ENCODE measurements at regions of chr9 and their contacts with region 1.

Region 1: GRCh38 chr9:22244141-22245011 is 202.2 kb upstream of the DMRTA1 start:
- DNase-seq: peak; percentile 78
- H3K4me3 ChIP-seq: no peak overlapping the region
- H3K27ac ChIP-seq: peak overlapping the region; percentile 44
- H3K27me3 ChIP-seq: no peaks in the 10 kb centered on the region
- CTCF ChIP-seq: peak; percentile 75

Region 2: DNA sequence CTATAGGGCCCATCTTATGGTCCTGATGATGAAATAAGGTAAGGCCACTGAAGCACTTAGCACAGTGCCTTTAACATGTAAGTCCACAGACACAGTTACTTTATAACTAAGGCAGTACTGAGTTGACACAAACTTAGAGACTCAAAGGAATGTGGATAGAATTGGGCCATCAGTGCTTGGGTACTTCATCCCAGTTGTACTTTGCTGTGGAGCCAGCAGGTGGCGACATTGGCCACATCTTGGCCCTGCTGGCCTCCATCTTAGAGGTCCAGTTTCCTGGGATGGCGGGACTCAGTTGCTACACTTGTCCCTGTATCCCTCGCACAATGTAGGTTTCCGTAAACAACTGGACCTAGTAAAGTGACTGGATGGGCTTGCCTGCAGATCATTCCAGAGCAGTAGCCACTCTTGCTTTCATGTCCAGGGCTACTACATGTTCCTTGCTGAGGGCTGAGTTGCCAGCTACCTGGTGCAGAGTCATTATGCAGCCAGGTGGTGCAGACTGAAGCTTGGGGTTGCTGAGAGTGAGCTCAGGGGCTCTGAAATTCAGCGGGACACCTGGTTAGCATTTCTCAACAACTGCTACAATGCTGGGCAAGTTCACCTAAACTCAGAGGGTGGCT is 431.3 kb before region 1 on chr9:
- in situ Hi-C with region 1: loop called (anchors 10 kb)
- DNase-seq: peak; percentile 74
- H3K4me3 ChIP-seq: no peak overlapping the region
- H3K27ac ChIP-seq: peak overlapping the region; percentile 59
- H3K27me3 ChIP-seq: no peaks in the 10 kb centered on the region
- CTCF ChIP-seq: peak; percentile 89

Region 3: DNA sequence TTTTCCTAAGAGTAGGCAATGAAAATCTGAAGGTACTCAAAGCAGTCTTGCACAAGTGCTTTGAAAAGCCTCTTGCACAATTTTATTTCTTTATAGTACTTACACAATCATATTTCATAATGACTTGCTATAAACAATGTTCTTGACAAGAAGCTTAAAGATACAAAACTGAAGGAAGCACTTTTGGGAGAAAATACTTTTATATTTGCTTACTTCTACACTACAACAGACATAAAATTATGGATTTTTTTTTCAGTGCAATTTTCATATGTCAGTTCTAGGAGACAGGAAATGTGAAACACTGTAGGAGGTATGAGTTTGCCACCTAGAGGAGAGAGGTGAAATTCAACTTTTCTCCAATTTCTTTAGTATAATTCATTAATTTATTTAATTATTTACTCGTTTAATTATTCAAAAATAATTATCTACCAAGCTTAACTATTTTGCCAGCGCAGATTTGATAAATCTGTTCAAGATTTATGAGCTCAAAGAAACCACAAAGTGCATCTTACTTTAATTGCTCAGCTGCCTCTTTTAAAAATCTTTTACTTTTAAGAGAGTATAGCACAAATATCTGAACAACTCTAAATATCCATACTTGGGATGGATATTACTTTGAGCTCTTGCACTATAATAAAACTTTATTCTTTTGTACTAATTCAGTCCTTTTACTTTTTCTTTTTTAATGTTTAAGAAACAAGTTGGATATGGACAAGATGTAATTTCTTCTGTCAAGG is 206.3 kb before region 1 on chr9:
- in situ Hi-C with region 1: loop called (anchors 25 kb)
- DNase-seq: no peak
- H3K4me3 ChIP-seq: no peak overlapping the region
- H3K27ac ChIP-seq: no peak overlapping the region
- H3K27me3 ChIP-seq: no peaks in the 10 kb centered on the region
- CTCF ChIP-seq: peak; percentile 49

Region 4: GRCh38 chr9:22079873-22080341 is 164.5 kb before region 1 on chr9:
- in situ Hi-C with region 1: no loop called
- DNase-seq: no peak
- H3K4me3 ChIP-seq: no peak overlapping the region
- H3K27ac ChIP-seq: no peak overlapping the region
- H3K27me3 ChIP-seq: no peaks in the 10 kb centered on the region
- CTCF ChIP-seq: no peak

Region 5: GRCh38 chr9:22440841-22441240 is 196.5 kb after region 1 on chr9:
- in situ Hi-C with region 1: no loop called
- DNase-seq: no peak
- H3K4me3 ChIP-seq: no peak overlapping the region
- H3K27ac ChIP-seq: no peak overlapping the region
- H3K27me3 ChIP-seq: no peaks in the 10 kb centered on the region
- CTCF ChIP-seq: no peak

Measured in brain microvascular endothelial cell (primary cell).